ENCODE measurements at regions of chr11 and their contacts with region 1.

Region 1: GRCh38 chr11:128354476-128354875 is 232.9 kb downstream of the ETS1 start:
- DNase-seq: no peak
- H3K4me3 Mint-ChIP-seq: no peak overlapping the region
- H3K27ac Mint-ChIP-seq: no peak overlapping the region
- H3K4me1 Mint-ChIP-seq: peaks cover 47% of the 10 kb centered on the region
- H3K27me3 Mint-ChIP-seq: no peaks in the 10 kb centered on the region

Region 2: DNA sequence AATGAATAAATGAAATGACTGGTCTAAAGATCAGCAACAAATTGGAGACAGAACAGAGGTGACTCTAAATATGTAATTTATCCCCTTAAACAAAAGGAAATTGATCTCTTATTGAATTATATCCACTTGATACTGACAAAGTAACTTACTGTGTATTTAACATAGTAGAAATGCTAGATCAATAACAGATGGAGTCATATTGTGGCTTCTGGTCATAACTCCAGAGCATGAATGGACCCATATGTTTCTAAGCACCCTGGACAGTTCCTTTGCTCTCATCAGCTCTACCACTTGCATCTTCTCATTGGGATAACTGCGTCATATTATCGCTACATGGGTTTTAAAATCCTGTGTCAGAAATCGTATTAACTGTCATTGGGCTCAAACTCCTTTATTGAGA is 10.6 kb after region 1 on chr11:
- CTCF ChIA-PET with region 1: interaction called, 6 read pairs
- intact Hi-C with region 1: loop called (anchors 2 kb)
- DNase-seq: peak; percentile 31
- H3K4me3 Mint-ChIP-seq: no peak overlapping the region
- H3K27ac Mint-ChIP-seq: no peak overlapping the region
- H3K4me1 Mint-ChIP-seq: peaks cover 11% of the 10 kb centered on the region
- H3K27me3 Mint-ChIP-seq: no peaks in the 10 kb centered on the region

Region 3: GRCh38 chr11:128412847-128413791 is 58.6 kb after region 1 on chr11:
- CTCF ChIA-PET with region 1: no interaction called
- intact Hi-C with region 1: loop called (anchors 2 kb)
- DNase-seq: no peak
- H3K4me3 Mint-ChIP-seq: no peak overlapping the region
- H3K27ac Mint-ChIP-seq: peak overlapping the region; percentile 2
- H3K4me1 Mint-ChIP-seq: peaks cover 72% of the 10 kb centered on the region
- H3K27me3 Mint-ChIP-seq: no peaks in the 10 kb centered on the region

Region 4: DNA sequence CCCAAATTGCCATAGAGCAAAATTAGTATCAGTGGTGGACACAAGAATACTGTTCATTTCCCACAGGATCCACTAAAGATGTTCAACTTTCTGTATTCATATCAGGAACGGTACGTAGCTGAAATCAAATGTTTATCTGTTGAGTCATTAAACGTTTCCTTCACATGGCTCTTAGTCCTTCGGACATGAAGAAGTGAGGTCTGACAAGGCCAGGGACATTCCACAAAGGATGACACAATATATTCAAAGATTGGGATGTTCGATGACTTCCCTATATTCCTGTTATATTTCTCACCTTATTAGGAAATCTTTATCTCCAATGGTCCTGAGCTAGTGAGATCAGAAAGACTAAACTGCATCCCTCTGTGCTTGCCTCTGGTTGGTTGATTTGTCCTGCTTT is 103.8 kb after region 1 on chr11:
- CTCF ChIA-PET with region 1: no interaction called
- intact Hi-C with region 1: no loop called
- DNase-seq: no peak
- H3K4me3 Mint-ChIP-seq: no peak overlapping the region
- H3K27ac Mint-ChIP-seq: no peak overlapping the region
- H3K4me1 Mint-ChIP-seq: peaks cover 66% of the 10 kb centered on the region
- H3K27me3 Mint-ChIP-seq: no peaks in the 10 kb centered on the region

Measured in activated naive CD4-positive, alpha-beta T cell treated with anti-CD3 and anti-CD28 coated beads for 36 hours (primary cell).